B cell (primary cell): ENCODE measurements at regions of chr6 and their contacts with region 1.

Region 1: DNA sequence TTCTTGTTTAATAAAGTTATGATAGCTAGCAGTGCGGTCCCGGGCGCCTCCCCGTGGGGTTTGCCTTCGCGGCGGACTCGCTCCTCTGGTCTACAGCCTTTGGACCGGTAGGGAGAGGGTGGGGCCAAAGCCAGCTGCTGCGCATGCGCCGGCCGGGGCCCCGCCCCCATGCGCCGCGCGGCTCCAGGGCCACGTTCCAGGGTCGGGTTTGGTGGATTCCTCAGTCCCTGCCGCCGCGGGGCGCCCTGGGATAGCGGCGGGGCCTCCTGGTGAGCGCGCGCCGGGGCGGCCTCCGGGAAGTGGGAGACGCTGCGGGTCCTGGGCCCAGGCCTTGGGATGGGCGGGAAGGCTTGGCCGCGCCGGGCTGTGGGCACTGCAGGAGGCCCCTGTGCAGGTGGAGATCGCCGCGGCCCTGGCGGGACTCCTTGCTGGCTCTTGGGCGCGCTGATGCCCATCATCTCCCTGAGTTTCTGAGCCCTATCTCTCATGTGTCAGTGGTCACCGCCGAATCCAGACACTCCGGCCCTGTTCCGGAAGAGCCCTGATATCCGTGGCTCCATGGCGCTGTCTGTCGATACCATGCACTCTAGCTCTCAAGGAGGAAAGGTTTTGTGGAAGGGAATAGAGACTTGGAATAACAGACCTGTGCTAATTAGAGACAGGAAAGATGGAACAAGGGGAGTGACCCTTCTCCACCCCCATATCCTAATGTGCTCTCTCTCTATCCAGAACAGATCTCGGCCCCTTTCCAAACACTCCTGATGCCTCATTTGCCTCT is at the start of gene VARS2:
- DNase-seq: peak; percentile 92
- ATAC-seq: peak; percentile 96
- H3K4me3 ChIP-seq: peak within 1 kb of the TSS; percentile 27 to 84 (median 78)
- H3K4me3 Mint-ChIP-seq: peak within 1 kb of the TSS; percentile 90
- H3K27ac ChIP-seq: peak within 1 kb of the TSS; percentile 24 to 78
- H3K27ac Mint-ChIP-seq: peak within 1 kb of the TSS; percentile 88
- H3K4me1 ChIP-seq: peaks cover 11 to 20% of the 10 kb centered on the region in 2 donors
- H3K4me1 Mint-ChIP-seq: peaks cover 24% of the 10 kb centered on the region
- H3K27me3 ChIP-seq: no peaks in the 10 kb centered on the region
- H3K27me3 Mint-ChIP-seq: no peaks in the 10 kb centered on the region
- CTCF ChIP-seq: peak; percentile 20
- total RNA-seq, gene VARS2: 41.0 and 41.6 TPM in 2 replicates

Region 2: DNA sequence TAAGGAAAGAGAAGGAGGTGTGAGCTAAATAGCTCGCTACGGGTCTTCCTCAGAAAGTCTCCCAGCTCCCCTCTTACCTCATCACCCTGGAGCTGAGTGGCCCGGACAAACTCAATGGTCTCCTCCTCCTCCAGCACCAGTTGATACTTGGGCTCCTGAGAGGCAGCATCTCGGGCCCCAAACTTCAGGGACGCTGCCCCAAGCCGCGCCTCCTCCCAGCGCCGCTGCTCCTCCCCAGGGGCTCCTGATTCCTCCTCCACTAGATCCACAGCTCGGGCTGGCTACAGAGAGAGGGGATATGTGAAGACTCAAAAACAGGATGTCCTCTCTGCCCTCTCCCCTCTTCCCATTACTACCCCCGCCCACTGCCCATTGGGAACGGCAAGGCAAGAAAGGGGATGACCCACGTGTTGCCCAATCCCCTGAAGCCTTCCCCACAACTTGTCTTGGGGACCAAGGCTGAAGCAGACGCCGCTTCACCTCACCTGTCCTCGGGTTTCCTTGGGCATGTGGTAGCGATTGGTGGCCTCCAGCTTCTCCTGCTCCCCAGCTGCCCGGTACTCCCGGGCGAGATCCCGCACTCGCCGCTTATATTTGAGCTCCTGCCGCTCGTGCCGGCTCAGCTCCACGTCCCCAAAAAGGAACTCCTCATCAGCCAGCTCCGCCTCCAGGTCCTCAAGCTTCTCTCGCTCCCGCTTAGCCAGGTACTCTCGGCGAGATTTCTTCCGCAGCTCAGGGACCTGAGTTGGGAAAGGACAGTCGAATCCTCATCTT is 249.1 kb before region 1 on chr6:
- CTCF ChIA-PET with region 1: no interaction called
- POLR2A ChIA-PET with region 1: no interaction called
- intact Hi-C with region 1: no loop called
- DNase-seq: no peak
- ATAC-seq: no peak
- H3K4me3 ChIP-seq: no peak overlapping the region
- H3K4me3 Mint-ChIP-seq: no peak overlapping the region
- H3K27ac ChIP-seq: no peak overlapping the region
- H3K27ac Mint-ChIP-seq: no peak overlapping the region
- H3K4me1 ChIP-seq: no peaks in the 10 kb centered on the region
- H3K4me1 Mint-ChIP-seq: peaks cover 2% of the 10 kb centered on the region
- H3K27me3 ChIP-seq: no peaks in the 10 kb centered on the region
- H3K27me3 Mint-ChIP-seq: no peaks in the 10 kb centered on the region
- CTCF ChIP-seq: no peak

Region 3: DNA sequence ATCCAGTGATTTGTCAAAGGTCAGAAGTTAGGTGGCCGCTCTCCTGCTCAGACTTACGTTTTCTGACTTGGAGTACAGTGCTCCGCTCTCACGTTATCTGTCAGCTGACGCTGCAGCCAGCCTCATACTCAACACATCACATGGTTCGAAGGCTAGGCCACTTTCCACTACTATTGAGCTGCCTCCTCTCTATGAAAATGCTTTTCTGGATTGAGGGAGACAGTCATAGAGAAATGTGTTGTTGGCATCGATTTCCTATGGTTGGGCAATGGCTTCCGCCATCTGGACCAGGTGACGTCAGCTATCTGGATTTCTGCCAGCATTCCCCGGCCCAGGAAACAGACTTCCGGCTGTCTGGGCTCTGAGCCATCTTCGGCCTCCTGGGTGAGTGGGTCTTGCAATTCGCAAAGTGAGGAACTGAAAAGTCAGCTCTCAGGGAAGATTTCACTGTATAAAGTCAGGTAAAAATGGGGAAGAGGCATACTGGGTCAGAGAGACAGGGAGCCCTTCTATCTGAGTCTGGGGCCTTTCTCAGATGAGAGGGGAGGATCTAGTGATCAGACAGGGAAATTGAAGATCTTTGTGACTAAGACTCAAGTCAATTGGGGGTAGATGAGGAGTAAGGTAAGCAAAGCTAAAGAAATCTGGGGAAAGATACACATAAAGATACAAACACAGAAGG is 132.4 kb before region 1 on chr6:
- CTCF ChIA-PET with region 1: no interaction called
- POLR2A ChIA-PET with region 1: no interaction called
- intact Hi-C with region 1: no loop called
- DNase-seq: peak; percentile 65
- ATAC-seq: peak; percentile 41
- H3K4me3 ChIP-seq: no peak overlapping the region
- H3K4me3 Mint-ChIP-seq: no peak overlapping the region
- H3K27ac ChIP-seq: peak overlapping the region in 1 of 2 donors; percentile 40
- H3K27ac Mint-ChIP-seq: peak overlapping the region; percentile 54
- H3K4me1 ChIP-seq: peaks cover 11% of the 10 kb centered on the region in 2 donors
- H3K4me1 Mint-ChIP-seq: peaks cover 16% of the 10 kb centered on the region
- H3K27me3 ChIP-seq: no peaks in the 10 kb centered on the region
- H3K27me3 Mint-ChIP-seq: peaks cover 28% of the 10 kb centered on the region
- CTCF ChIP-seq: no peak

Region 4: DNA sequence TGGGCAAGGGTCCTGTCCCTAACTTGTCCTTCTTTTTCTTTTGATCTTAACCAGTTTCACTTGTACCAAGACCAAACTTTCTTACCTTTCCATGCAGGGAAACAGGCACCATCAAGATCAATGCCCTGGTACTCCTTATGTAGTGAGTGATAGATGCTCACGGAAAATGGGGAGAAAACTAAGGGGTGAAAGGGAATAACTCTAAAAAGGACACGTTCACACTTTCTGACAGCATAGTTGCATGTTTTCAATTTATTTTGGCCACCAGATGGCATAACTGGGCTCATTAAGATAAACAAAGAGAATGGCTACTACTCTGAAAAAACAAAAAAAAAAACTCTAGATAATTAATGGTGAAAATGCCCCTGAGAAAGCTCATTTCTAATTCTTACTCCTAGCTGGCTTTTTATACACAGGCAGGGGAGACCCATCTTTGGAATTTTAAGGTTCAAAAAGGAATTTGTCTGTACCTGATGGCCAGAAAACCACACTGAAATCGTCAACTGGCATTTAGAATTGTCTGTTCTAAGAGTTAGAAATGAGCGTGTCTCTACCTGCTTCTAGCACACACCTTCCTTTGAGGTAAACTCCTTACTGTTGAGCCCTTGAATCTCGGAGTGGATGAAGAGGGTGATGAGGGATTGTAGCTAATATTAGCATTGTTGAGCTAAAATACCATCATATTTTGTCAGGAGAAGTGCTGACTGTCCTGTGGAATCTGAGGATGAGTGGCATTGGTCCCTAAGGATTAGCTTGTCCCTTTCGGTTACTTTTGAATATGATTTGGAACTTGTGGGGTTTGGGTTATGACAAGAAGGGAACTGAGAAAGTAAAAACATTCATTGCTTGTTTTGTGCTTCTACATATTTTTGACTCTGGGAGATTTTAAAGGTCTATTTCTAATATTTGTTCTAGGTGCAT is 92.1 kb before region 1 on chr6:
- CTCF ChIA-PET with region 1: interaction called, 87 read pairs
- POLR2A ChIA-PET with region 1: no interaction called
- intact Hi-C with region 1: no loop called
- DNase-seq: peak; percentile 57
- ATAC-seq: no peak
- H3K4me3 ChIP-seq: no peak overlapping the region
- H3K4me3 Mint-ChIP-seq: no peak overlapping the region
- H3K27ac ChIP-seq: no peak overlapping the region
- H3K27ac Mint-ChIP-seq: no peak overlapping the region
- H3K4me1 ChIP-seq: no peaks in the 10 kb centered on the region
- H3K4me1 Mint-ChIP-seq: peaks cover 11% of the 10 kb centered on the region
- H3K27me3 ChIP-seq: no peaks in the 10 kb centered on the region
- H3K27me3 Mint-ChIP-seq: peaks cover 2% of the 10 kb centered on the region
- CTCF ChIP-seq: peak; percentile 74

Region 5: DNA sequence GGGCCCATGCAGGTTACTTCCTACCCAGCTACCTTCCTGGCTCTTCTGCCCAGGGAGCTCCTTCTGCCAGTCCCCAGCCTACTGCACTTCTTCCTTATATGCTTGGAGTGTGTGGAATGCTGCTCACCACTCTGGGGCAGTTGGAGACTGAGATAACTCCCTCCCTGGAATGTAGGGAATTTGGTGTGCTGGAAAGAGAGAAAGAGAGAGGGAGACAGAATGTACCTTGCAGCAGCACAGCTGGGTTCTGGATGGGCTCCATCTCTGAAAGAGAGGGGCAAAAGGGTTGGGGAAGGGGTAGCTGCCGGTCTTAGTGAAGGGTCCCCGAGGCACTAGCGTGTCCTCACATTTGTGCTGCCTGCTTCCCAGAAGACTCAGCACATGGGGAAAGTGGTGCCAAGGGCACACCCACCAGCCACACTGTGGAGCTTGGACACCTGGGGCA is 70.2 kb before region 1 on chr6:
- CTCF ChIA-PET with region 1: no interaction called
- POLR2A ChIA-PET with region 1: no interaction called
- intact Hi-C with region 1: no loop called
- DNase-seq: no peak
- ATAC-seq: no peak
- H3K4me3 ChIP-seq: no peak overlapping the region
- H3K4me3 Mint-ChIP-seq: no peak overlapping the region
- H3K27ac ChIP-seq: no peak overlapping the region
- H3K27ac Mint-ChIP-seq: no peak overlapping the region
- H3K4me1 ChIP-seq: no peaks in the 10 kb centered on the region
- H3K4me1 Mint-ChIP-seq: no peaks in the 10 kb centered on the region
- H3K27me3 ChIP-seq: peaks cover 0 to 4% (median 0%) of the 10 kb centered on the region in 4 experiments
- H3K27me3 Mint-ChIP-seq: peaks cover 30% of the 10 kb centered on the region
- CTCF ChIP-seq: no peak

Region 6: DNA sequence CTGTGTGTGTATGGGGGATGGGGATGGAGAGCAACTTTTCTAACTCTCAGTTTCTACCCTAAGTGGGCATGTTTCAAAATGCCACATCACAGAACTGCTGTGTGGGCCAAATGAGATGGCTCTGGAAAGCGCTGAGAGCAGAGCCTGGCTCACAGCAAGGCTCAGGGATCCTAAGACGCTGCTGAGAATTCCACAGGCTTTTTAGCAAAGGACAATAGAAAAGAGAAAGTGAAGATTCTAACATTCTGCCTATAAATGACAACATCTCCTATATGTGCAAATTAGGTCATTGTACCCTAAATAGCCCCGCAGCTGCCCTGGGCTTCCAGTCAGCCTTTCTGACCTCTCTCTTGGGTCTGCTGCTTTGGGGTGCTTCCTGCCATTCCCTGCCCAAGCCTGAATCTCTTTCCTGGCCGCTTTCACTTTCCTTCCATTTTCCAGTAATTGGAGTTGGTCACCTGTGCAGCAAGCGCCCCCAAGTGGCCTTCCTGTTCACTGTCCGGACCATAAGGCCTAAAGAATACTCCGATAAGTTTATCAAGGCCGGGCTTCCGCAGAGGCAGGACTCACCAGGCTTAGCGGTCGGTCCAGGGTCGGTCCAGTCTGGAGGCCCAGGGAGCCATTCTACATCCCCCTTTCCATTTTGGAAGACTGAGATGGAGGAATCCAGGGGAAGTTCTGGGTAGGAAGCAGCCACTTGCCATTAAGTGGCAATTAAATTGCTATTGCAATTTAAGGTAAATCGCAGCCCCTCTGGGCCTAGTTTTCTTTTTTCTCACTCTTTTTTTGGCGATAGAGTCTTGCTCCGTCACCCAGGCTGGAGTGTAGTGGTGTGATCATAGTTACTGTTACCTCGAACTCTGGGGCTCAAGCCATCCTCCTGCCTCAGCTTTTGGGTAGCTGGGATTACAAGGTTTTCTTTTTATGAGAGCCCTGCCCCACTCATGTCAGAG is 36.6 kb before region 1 on chr6:
- CTCF ChIA-PET with region 1: interaction called, 26 read pairs
- POLR2A ChIA-PET with region 1: interaction called, 18 read pairs
- intact Hi-C with region 1: no loop called
- DNase-seq: peak; percentile 79
- ATAC-seq: peak; percentile 82
- H3K4me3 ChIP-seq: peak overlapping the region in 1 of 5 experiments; percentile 21
- H3K4me3 Mint-ChIP-seq: peak overlapping the region; percentile 48
- H3K27ac ChIP-seq: peak overlapping the region in 1 of 2 donors; percentile 44
- H3K27ac Mint-ChIP-seq: peak overlapping the region; percentile 54
- H3K4me1 ChIP-seq: peaks cover 27 to 28% of the 10 kb centered on the region in 2 donors
- H3K4me1 Mint-ChIP-seq: peaks cover 37% of the 10 kb centered on the region
- H3K27me3 ChIP-seq: no peaks in the 10 kb centered on the region
- H3K27me3 Mint-ChIP-seq: peaks cover 3% of the 10 kb centered on the region
- CTCF ChIP-seq: peak; percentile 82

Region 7: DNA sequence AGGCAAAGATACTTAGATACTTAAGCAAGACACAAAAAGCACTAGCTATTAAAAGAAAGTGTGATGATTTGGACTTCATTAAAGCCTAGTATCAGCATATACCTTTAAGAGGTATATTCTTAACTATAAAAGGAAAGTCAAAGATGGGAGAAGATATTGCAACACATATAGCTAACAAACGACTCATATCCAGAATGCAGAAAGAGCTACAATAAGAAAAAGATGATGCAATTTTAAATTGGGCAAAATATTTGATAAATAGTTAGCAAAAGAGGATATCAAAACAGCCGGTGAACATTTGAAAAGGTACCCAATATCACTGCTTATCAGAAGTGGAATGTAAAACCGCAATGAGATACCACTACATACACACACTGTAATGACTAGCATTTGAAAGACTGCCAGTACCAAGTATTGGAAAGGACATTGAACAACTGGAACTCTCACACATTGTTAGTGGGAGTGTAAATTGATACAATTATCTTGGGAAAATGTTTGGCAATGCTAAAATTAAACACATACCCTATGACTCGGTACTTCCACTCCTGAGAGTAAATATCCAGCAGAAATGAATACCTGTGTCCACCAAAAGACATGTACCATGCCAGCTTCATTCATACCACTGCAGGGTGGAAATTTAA is 121.7 kb after region 1 on chr6:
- CTCF ChIA-PET with region 1: no interaction called
- POLR2A ChIA-PET with region 1: no interaction called
- intact Hi-C with region 1: no loop called
- DNase-seq: no peak
- ATAC-seq: no peak
- H3K4me3 ChIP-seq: no peak overlapping the region
- H3K4me3 Mint-ChIP-seq: no peak overlapping the region
- H3K27ac ChIP-seq: no peak overlapping the region
- H3K27ac Mint-ChIP-seq: no peak overlapping the region
- H3K4me1 ChIP-seq: no peaks in the 10 kb centered on the region
- H3K4me1 Mint-ChIP-seq: no peaks in the 10 kb centered on the region
- H3K27me3 ChIP-seq: peaks cover 0 to 19% (median 0%) of the 10 kb centered on the region in 4 experiments
- H3K27me3 Mint-ChIP-seq: peaks cover 36% of the 10 kb centered on the region
- CTCF ChIP-seq: no peak

Region 8: GRCh38 chr6:31068669-31069340 is 154.5 kb after region 1 on chr6:
- CTCF ChIA-PET with region 1: interaction called, 45 read pairs
- POLR2A ChIA-PET with region 1: no interaction called
- intact Hi-C with region 1: loop called (anchors 1 kb)
- DNase-seq: peak; percentile 82
- ATAC-seq: peak; percentile 98
- H3K4me3 ChIP-seq: no peak overlapping the region
- H3K4me3 Mint-ChIP-seq: no peak overlapping the region
- H3K27ac ChIP-seq: no peak overlapping the region
- H3K27ac Mint-ChIP-seq: no peak overlapping the region
- H3K4me1 ChIP-seq: no peaks in the 10 kb centered on the region
- H3K4me1 Mint-ChIP-seq: peaks cover 2% of the 10 kb centered on the region
- H3K27me3 ChIP-seq: peaks cover 0 to 2% (median 0%) of the 10 kb centered on the region in 4 experiments
- H3K27me3 Mint-ChIP-seq: no peaks in the 10 kb centered on the region
- CTCF ChIP-seq: peak; percentile 92

Region 9: GRCh38 chr6:31087494-31088089 is 173.3 kb after region 1 on chr6:
- CTCF ChIA-PET with region 1: interaction called, 49 read pairs
- POLR2A ChIA-PET with region 1: no interaction called
- intact Hi-C with region 1: loop called (anchors 2 kb)
- DNase-seq: peak; percentile 89
- ATAC-seq: peak; percentile 95
- H3K4me3 ChIP-seq: no peak overlapping the region
- H3K4me3 Mint-ChIP-seq: no peak overlapping the region
- H3K27ac ChIP-seq: no peak overlapping the region
- H3K27ac Mint-ChIP-seq: no peak overlapping the region
- H3K4me1 ChIP-seq: no peaks in the 10 kb centered on the region
- H3K4me1 Mint-ChIP-seq: no peaks in the 10 kb centered on the region
- H3K27me3 ChIP-seq: no peaks in the 10 kb centered on the region
- H3K27me3 Mint-ChIP-seq: peaks cover 21% of the 10 kb centered on the region
- CTCF ChIP-seq: peak; percentile 84